ENCODE measurements at regions of chr7 and their contacts with region 1.

Region 1: GRCh38 chr7:132472463-132473120 is 103.7 kb downstream of the PLXNA4 start:
- DNase-seq: peak; percentile 82

Region 2: GRCh38 chr7:131657881-131658280 is 814.7 kb before region 1 on chr7:
- intact Hi-C with region 1: no loop called
- DNase-seq: peak; percentile 70

Region 3: DNA sequence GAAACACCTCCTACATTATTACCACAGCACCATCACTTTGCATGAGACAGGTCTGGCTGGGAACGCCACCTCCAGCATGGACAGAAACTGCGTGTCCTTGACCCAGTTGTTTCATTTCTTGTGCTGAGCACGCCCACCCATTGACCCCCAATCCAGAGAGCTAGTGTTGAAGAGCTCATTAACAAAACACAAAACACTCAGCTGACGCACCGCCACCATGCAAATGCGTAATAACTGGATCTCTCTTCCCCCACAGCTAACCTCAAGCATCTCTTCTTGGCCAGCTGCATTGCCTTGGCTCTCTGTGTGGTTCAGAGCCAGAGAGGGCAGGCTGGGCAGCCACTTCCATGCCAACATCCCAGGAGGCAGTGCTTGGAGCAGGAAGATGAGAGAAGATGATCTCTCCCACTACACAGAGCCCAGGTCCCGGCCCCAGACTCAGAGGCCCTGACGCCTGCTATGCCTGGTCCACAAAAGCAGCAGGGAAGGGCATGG is 69.8 kb before region 1 on chr7:
- intact Hi-C with region 1: loop called (anchors 5 kb)
- DNase-seq: peak; percentile 69

Region 4: GRCh38 chr7:132437730-132438129 is 34.9 kb before region 1 on chr7:
- intact Hi-C with region 1: loop called (anchors 5 kb)
- DNase-seq: peak; percentile 22

Region 5: GRCh38 chr7:132500727-132501440 is 28.3 kb after region 1 on chr7:
- intact Hi-C with region 1: no loop called
- DNase-seq: no peak

Region 6: DNA sequence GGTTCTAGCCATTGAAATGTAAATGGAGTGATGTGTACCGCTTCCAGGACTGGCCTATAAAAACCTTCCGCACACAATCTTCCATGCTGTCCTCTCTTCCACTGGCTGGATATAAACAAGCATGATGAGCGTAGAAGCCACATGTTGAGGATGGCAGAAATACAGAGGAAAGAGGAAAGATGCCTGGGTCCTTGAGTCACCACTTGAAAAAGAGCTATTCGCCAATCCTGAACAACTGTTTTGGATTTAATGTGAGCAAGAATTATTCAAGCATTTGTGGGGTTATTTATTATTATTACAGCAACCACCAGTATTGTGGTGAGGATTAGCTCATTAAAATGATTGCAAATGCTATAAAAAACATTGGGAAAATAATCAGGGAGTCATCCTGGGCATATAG is 149.5 kb after region 1 on chr7:
- intact Hi-C with region 1: no loop called
- DNase-seq: no peak

Measured in cardiac septum (tissue), 1 donor.